ENCODE measurements at regions of chr3 and their contacts with region 1.

Region 1: DNA sequence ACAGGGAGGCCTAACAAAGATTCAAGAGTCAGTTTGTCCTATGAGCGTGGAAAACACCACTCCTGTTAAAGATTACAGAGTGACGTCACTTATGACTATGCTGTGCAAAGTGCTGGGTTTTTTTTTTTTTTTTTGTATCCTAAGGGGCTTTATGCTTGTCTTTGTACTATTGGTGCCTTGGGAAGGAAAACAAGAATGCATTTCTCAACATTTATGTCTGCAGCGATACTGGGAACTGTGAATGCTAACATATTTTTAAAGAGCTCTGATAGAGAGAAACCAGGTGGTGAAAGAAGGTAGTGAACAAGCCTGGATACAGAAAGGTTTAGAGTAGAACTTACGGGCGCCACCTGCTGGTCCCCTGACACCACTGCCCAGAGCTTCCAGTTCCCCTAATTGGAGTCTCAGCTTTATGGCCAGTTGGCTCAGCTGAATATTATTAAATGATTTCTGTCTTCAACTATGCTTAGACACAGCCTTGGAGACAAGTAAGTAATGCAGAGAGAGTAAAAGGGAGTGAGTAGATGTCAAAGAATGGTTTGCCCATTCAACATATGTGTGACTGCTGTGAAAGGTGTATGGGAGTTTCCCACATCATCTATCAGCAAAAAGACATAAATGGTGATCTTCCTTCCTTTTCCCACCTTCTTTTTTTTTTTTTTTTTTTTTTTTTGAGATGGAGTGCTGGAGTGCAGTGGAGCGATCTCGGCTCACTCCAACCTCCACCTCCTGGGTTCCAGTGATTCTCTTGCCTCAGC is 807.9 kb upstream of the CFAP20DC start:
- DNase-seq: peak; percentile 38
- H3K4me3 ChIP-seq: no peak overlapping the region
- CTCF ChIP-seq: peak; percentile 91

Region 2: DNA sequence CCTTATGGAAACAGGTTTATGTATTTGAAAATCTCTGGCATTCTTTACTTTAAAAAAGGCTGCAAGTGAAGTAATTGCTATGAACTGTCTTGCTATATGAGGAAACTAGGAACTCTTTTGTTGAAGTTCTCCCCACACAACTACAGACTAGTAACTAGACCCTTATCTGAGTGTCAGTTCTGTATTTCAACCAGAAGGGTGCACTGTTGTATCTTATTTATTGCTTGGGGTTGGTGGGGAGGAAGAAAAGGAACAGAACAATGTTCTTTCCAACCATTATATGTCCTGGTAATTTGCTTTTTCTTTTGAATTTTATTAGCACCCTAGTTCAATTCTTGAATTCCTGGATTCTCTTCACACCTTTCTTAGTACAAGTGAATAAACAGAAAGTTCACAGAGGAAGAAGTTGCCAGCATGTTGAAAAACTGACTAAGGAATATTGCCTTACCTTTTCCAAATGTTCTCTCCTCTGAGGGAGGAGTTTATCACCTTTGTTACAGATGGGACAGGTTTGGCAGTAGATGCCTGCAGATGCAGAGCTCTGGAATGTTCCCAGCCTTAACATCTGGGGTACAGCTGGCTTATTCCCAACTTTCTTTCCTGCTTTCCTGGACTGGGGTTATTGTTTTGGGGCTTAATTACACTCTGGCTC is 645.5 kb before region 1 on chr3:
- CTCF ChIA-PET with region 1: interaction called, 45 read pairs
- POLR2A ChIA-PET with region 1: no interaction called
- DNase-seq: peak; percentile 7
- H3K4me3 ChIP-seq: no peak overlapping the region
- CTCF ChIP-seq: peak; percentile 55

Region 3: GRCh38 chr3:59607656-59608055 is 250.1 kb before region 1 on chr3:
- CTCF ChIA-PET with region 1: interaction called, 15 read pairs
- POLR2A ChIA-PET with region 1: no interaction called
- DNase-seq: no peak
- H3K4me3 ChIP-seq: no peak overlapping the region
- CTCF ChIP-seq: no peak

Region 4: GRCh38 chr3:59839810-59840515 is 17.8 kb before region 1 on chr3:
- CTCF ChIA-PET with region 1: interaction called, 10 read pairs
- POLR2A ChIA-PET with region 1: no interaction called
- DNase-seq: no peak
- H3K4me3 ChIP-seq: no peak overlapping the region
- CTCF ChIP-seq: no peak